Endothelial cell of umbilical vein (primary cell): ENCODE measurements at regions of chr10 and their contacts with region 1.

Region 1: DNA sequence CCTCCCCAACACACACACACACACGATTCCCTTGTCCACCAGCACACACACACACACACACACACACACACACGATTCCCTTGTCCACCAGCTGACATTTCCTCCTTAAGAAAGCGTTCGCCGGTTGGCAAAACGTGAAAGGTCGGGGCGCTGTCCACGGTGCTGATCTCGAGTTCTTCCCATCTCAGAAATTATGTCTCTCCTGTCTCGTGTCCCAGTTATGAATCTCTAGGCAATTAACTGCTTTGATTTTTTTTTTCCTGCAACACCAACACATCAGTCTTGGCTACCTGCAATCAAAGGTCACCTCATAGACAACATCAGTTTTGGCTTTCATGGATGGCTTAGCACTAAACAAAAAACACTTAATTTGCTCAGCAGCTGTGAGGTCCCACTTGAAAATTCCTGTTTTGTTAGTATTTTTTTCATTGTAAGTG is 1.9 kb downstream of the INA start:
- DNase-seq: peak; percentile 40
- H3K4me3 ChIP-seq: no peak overlapping the region
- H3K27ac ChIP-seq: no peak overlapping the region
- H3K4me1 ChIP-seq: peaks cover 2% of the 10 kb centered on the region
- H3K27me3 ChIP-seq: peaks cover 36 to 47% of the 10 kb centered on the region in 2 experiments
- CTCF ChIP-seq: no peak
- POLR2A ChIP-seq: no peak

Region 2: GRCh38 chr10:103265717-103266329 is 13.1 kb before region 1 on chr10:
- CTCF ChIA-PET with region 1: interaction called, 5 read pairs
- POLR2A ChIA-PET with region 1: no interaction called
- dilution Hi-C with region 1: no loop called
- intact Hi-C with region 1: loop called (anchors 1 kb)
- DNase-seq: peak; percentile 62
- H3K4me3 ChIP-seq: no peak overlapping the region
- H3K27ac ChIP-seq: no peak overlapping the region
- H3K4me1 ChIP-seq: no peaks in the 10 kb centered on the region
- H3K27me3 ChIP-seq: peaks cover 7 to 8% of the 10 kb centered on the region in 2 experiments
- CTCF ChIP-seq: no peak
- POLR2A ChIP-seq: no peak

Region 3: GRCh38 chr10:103605359-103606095 is 326.6 kb after region 1 on chr10:
- CTCF ChIA-PET with region 1: no interaction called
- POLR2A ChIA-PET with region 1: no interaction called
- dilution Hi-C with region 1: no loop called
- intact Hi-C with region 1: no loop called
- DNase-seq: peak; percentile 28
- H3K4me3 ChIP-seq: no peak overlapping the region
- H3K27ac ChIP-seq: no peak overlapping the region
- H3K4me1 ChIP-seq: no peaks in the 10 kb centered on the region
- H3K27me3 ChIP-seq: no peaks in the 10 kb centered on the region
- CTCF ChIP-seq: peak; percentile 63 to 71
- POLR2A ChIP-seq: no peak